Activated naive CD8-positive, alpha-beta T cell treated with anti-CD3 and anti-CD28 coated beads, Interleukin-2, amount 10 ng/mL, durations not matched to agents 7 days and 5 days (primary cell): ENCODE measurements at regions of chr1 and their contacts with region 1.

Region 1: GRCh38 chr1:31944205-31945089 is 6.3 kb upstream of the PTP4A2 start:
- DNase-seq: peak; percentile 91
- ATAC-seq: peak; percentile 80
- H3K4me3 Mint-ChIP-seq: peak overlapping the region; percentile 90
- H3K27ac Mint-ChIP-seq: peak overlapping the region; percentile 97
- H3K4me1 Mint-ChIP-seq: peaks cover 51% of the 10 kb centered on the region
- H3K27me3 Mint-ChIP-seq: no peaks in the 10 kb centered on the region

Region 2: DNA sequence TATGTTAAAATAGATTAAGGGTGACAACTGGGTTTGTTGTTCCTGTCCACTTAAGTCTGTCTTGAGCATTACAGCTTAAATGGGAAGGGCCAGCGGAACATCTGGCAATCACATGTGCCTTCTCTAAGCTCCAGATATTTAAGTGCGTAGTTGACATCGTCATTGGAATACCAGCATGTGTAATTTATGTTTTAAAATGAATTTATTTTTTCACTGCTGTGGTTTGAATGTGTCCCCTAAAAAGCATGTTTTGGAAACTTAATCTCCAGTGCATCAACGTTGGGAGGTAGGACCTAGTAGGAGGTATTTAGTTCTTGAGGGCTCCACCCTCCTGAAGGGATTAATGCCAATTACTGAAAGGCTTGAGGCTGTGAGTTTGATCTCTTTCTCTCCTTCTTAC is 634.2 kb before region 1 on chr1:
- POLR2A ChIA-PET with region 1: no interaction called
- DNase-seq: no peak
- ATAC-seq: no peak
- H3K4me3 Mint-ChIP-seq: no peak overlapping the region
- H3K27ac Mint-ChIP-seq: no peak overlapping the region
- H3K4me1 Mint-ChIP-seq: peaks cover 8% of the 10 kb centered on the region
- H3K27me3 Mint-ChIP-seq: no peaks in the 10 kb centered on the region

Region 3: DNA sequence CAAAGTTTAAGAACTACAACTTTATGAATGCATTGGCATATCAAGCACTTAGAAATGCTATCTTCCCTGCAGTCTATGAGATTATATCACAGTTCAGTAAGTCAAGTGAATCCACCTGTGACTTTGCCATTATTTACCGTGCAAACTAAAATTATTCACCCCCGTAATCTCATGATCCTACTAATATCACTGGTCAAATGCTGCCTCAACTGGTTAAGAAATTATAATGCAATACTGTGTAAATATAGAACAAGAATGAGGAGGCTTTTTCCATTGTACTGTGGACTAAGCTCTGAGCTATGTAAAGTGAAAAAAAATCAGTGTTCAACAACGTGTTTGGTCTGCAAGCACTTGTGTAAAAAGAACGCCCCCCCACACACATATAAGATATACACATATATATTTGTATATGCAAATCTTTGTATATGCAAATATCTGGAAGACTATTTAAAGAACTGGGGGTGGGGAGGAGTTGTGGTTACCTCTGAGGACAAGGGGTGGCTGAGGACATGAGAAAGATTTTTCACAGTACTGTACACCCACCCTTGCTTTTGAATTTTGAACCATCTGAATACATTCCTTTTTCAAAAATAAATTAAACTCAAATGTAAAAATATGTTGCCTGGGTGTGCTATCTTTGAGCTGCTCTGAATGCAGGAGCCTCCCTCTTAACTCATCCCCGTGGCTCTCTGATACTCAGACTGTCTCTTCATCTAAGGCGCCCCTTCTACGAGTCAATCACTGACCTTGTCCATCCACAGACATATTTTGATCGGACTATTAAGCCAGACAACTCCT is 63.4 kb before region 1 on chr1:
- POLR2A ChIA-PET with region 1: no interaction called
- DNase-seq: no peak
- ATAC-seq: no peak
- H3K4me3 Mint-ChIP-seq: no peak overlapping the region
- H3K27ac Mint-ChIP-seq: no peak overlapping the region
- H3K4me1 Mint-ChIP-seq: peaks cover 9% of the 10 kb centered on the region
- H3K27me3 Mint-ChIP-seq: no peaks in the 10 kb centered on the region

Region 4: GRCh38 chr1:31923901-31924535 is 20.4 kb before region 1 on chr1:
- POLR2A ChIA-PET with region 1: interaction called, 41 read pairs
- DNase-seq: no peak
- ATAC-seq: no peak
- H3K4me3 Mint-ChIP-seq: peak overlapping the region; percentile 61
- H3K27ac Mint-ChIP-seq: peak overlapping the region; percentile 82
- H3K4me1 Mint-ChIP-seq: peaks cover 67% of the 10 kb centered on the region
- H3K27me3 Mint-ChIP-seq: no peaks in the 10 kb centered on the region

Region 5: GRCh38 chr1:31961536-31961935 is 17.1 kb after region 1 on chr1:
- POLR2A ChIA-PET with region 1: interaction called, 319 read pairs
- DNase-seq: no peak
- ATAC-seq: no peak
- H3K4me3 Mint-ChIP-seq: peak overlapping the region; percentile 30
- H3K27ac Mint-ChIP-seq: peak overlapping the region; percentile 81
- H3K4me1 Mint-ChIP-seq: peaks cover 47% of the 10 kb centered on the region
- H3K27me3 Mint-ChIP-seq: no peaks in the 10 kb centered on the region

Region 6: GRCh38 chr1:31984419-31985347 is 40.2 kb after region 1 on chr1:
- POLR2A ChIA-PET with region 1: interaction called, 10 read pairs
- DNase-seq: no peak
- ATAC-seq: peak; percentile 63
- H3K4me3 Mint-ChIP-seq: peak overlapping the region; percentile 41
- H3K27ac Mint-ChIP-seq: peak overlapping the region; percentile 91
- H3K4me1 Mint-ChIP-seq: peaks cover 42% of the 10 kb centered on the region
- H3K27me3 Mint-ChIP-seq: no peaks in the 10 kb centered on the region

Region 7: DNA sequence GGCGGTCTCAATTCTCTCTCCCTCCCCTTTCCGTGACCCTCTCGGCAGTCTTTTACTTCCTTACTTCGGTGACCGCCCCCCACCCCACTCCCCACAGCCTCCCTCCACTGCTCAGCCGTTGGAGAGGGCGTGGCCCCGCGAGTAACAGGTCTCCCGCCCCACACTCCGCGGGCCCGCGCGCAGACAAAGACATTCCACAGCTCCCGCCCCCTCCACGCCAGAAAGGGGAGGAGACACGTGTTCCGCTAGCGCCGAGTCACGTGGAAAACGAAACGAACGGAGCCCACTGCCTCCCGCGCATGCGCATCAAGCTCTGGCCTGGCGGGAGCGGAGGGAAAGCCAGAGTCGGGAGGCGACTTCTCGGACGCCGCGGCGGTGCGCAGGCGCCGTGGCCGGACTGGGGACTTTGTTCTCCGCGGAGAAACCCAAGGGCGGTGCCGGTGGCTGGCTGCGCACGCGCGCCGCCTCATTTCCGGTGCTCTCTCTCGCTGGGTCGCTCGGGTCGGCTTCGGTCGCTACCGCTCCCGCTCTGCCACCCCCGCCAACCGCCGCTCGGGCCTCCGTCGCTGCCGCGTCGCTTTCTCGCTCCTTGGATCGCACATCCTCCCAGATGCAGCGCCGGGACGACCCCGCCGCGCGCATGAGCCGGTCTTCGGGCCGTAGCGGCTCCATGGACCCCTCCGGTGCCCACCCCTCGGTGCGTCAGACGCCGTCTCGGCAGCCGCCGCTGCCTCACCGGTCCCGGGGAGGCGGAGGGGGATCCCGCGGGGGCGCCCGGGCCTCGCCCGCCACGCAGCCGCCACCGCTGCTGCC is 69.1 kb after region 1 on chr1 and contains the start of gene KHDRBS1:
- POLR2A ChIA-PET with region 1: interaction called, 16 read pairs
- DNase-seq: peak; percentile 99
- ATAC-seq: peak; percentile 87
- H3K4me3 Mint-ChIP-seq: peak within 1 kb of the TSS; percentile 98
- H3K27ac Mint-ChIP-seq: peak within 1 kb of the TSS; percentile 96
- H3K4me1 Mint-ChIP-seq: peaks cover 25% of the 10 kb centered on the region
- H3K27me3 Mint-ChIP-seq: no peaks in the 10 kb centered on the region
- total RNA-seq, gene KHDRBS1: 162 TPM